Spleen (tissue), 13 donors: ENCODE measurements at regions of chr5 and their contacts with region 1.

Region 1: GRCh38 chr5:103041071-103041676 is 78.8 kb downstream of the GIN1 start:
- DNase-seq: no peak
- H3K4me3 ChIP-seq: no peak overlapping the region
- H3K27ac ChIP-seq: no peak overlapping the region
- H3K4me1 ChIP-seq: no peaks in the 10 kb centered on the region
- H3K27me3 ChIP-seq: no peaks in the 10 kb centered on the region
- CTCF ChIP-seq: peak in 7 of 11 experiments; percentile 11 to 38 (median 32)
- POLR2A ChIP-seq: no peak

Region 2: GRCh38 chr5:102603670-102604069 is 437.5 kb before region 1 on chr5:
- intact Hi-C with region 1: no loop called
- DNase-seq: no peak
- H3K4me3 ChIP-seq: no peak overlapping the region
- H3K27ac ChIP-seq: no peak overlapping the region
- H3K4me1 ChIP-seq: no peaks in the 10 kb centered on the region
- H3K27me3 ChIP-seq: no peaks in the 10 kb centered on the region
- CTCF ChIP-seq: no peak
- POLR2A ChIP-seq: no peak

Region 3: GRCh38 chr5:102678267-102679058 is 362.7 kb before region 1 on chr5:
- intact Hi-C with region 1: loop called (anchors 5 kb)
- DNase-seq: no peak
- H3K4me3 ChIP-seq: no peak overlapping the region
- H3K27ac ChIP-seq: no peak overlapping the region
- H3K4me1 ChIP-seq: no peaks in the 10 kb centered on the region
- H3K27me3 ChIP-seq: no peaks in the 10 kb centered on the region
- CTCF ChIP-seq: no peak
- POLR2A ChIP-seq: no peak

Region 4: GRCh38 chr5:103487218-103487617 is 446.0 kb after region 1 on chr5:
- intact Hi-C with region 1: no loop called
- DNase-seq: no peak
- H3K4me3 ChIP-seq: no peak overlapping the region
- H3K27ac ChIP-seq: no peak overlapping the region
- H3K4me1 ChIP-seq: no peaks in the 10 kb centered on the region
- H3K27me3 ChIP-seq: no peaks in the 10 kb centered on the region
- CTCF ChIP-seq: no peak
- POLR2A ChIP-seq: no peak